Naive thymus-derived CD4-positive, alpha-beta T cell (primary cell): ENCODE measurements at regions of chr20 and their contacts with region 1.

Region 1: GRCh38 chr20:59032023-59032712 is at the start of gene ATP5F1E:
- DNase-seq: peak; percentile 94 to 98 (median 96)
- ATAC-seq: peak; percentile 98
- H3K4me3 ChIP-seq: peak within 1 kb of the TSS; percentile 62
- H3K4me3 Mint-ChIP-seq: peak within 1 kb of the TSS; percentile 87 to 96 (median 94)
- H3K27ac ChIP-seq: peak within 1 kb of the TSS; percentile 85
- H3K27ac Mint-ChIP-seq: peak within 1 kb of the TSS; percentile 86 to 98 (median 94)
- H3K4me1 ChIP-seq: peaks cover 40 to 44% of the 10 kb centered on the region in 2 donors
- H3K4me1 Mint-ChIP-seq: peaks cover 40 to 62% (median 56%) of the 10 kb centered on the region in 7 donors
- H3K27me3 ChIP-seq: no peaks in the 10 kb centered on the region
- H3K27me3 Mint-ChIP-seq: no peaks in the 10 kb centered on the region
- total RNA-seq, gene ATP5F1E: 57.0 to 81.7 (median 67.4) TPM

Region 2: GRCh38 chr20:58236612-58237330 is 795.4 kb before region 1 on chr20:
- CTCF ChIA-PET with region 1: no interaction called
- POLR2A ChIA-PET with region 1: no interaction called
- intact Hi-C with region 1: loop called in 1 of 2 experiments (anchors 10 kb)
- DNase-seq: peak; percentile 62 to 90 (median 80)
- ATAC-seq: peak; percentile 96
- H3K4me3 ChIP-seq: peak overlapping the region; percentile 65
- H3K4me3 Mint-ChIP-seq: peak overlapping the region; percentile 77 to 94 (median 92)
- H3K27ac ChIP-seq: peak overlapping the region; percentile 76
- H3K27ac Mint-ChIP-seq: peak overlapping the region; percentile 71 to 96 (median 91)
- H3K4me1 ChIP-seq: no peaks in the 10 kb centered on the region
- H3K4me1 Mint-ChIP-seq: peaks cover 2 to 25% (median 17%) of the 10 kb centered on the region in 7 donors
- H3K27me3 ChIP-seq: no peaks in the 10 kb centered on the region
- H3K27me3 Mint-ChIP-seq: no peaks in the 10 kb centered on the region

Region 3: GRCh38 chr20:58888521-58889333 is 143.4 kb before region 1 on chr20:
- CTCF ChIA-PET with region 1: no interaction called
- POLR2A ChIA-PET with region 1: interaction called, 17 read pairs
- intact Hi-C with region 1: loop called (anchors 1 kb)
- DNase-seq: peak; percentile 64 to 91 (median 86)
- ATAC-seq: peak; percentile 76
- H3K4me3 ChIP-seq: peak overlapping the region; percentile 68
- H3K4me3 Mint-ChIP-seq: peak overlapping the region; percentile 81 to 94 (median 87)
- H3K27ac ChIP-seq: peak overlapping the region; percentile 95
- H3K27ac Mint-ChIP-seq: peak overlapping the region; percentile 67 to 97 (median 90)
- H3K4me1 ChIP-seq: peaks cover 4 to 6% of the 10 kb centered on the region in 2 donors
- H3K4me1 Mint-ChIP-seq: peaks cover 15 to 46% (median 37%) of the 10 kb centered on the region in 7 donors
- H3K27me3 ChIP-seq: no peaks in the 10 kb centered on the region
- H3K27me3 Mint-ChIP-seq: peaks cover 0 to 3% (median 0%) of the 10 kb centered on the region in 5 donors

Region 4: GRCh38 chr20:59006864-59007664 is 25.1 kb before region 1 on chr20 and contains the start of gene CTSZ:
- CTCF ChIA-PET with region 1: no interaction called
- POLR2A ChIA-PET with region 1: interaction called, 10 read pairs
- intact Hi-C with region 1: loop called (anchors 1 kb)
- DNase-seq: peak in 7 of 9 donors; percentile 22 to 70 (median 36)
- ATAC-seq: peak; percentile 63
- H3K4me3 ChIP-seq: peak within 1 kb of the TSS; percentile 55
- H3K4me3 Mint-ChIP-seq: peak within 1 kb of the TSS; percentile 72 to 89 (median 80)
- H3K27ac ChIP-seq: peak within 1 kb of the TSS; percentile 62
- H3K27ac Mint-ChIP-seq: peak within 1 kb of the TSS in 6 of 9 donors; percentile 36 to 93 (median 62)
- H3K4me1 ChIP-seq: peaks cover 20 to 23% of the 10 kb centered on the region in 2 donors
- H3K4me1 Mint-ChIP-seq: peaks cover 32 to 54% (median 38%) of the 10 kb centered on the region in 7 donors
- H3K27me3 ChIP-seq: no peaks in the 10 kb centered on the region
- H3K27me3 Mint-ChIP-seq: no peaks in the 10 kb centered on the region
- total RNA-seq, gene CTSZ: 29.5 to 165 (median 34.1) TPM

Region 5: GRCh38 chr20:59159493-59160376 is 127.6 kb after region 1 on chr20:
- CTCF ChIA-PET with region 1: no interaction called
- POLR2A ChIA-PET with region 1: interaction called, 10 read pairs
- intact Hi-C with region 1: loop called in 1 of 2 experiments (anchors 2 kb)
- DNase-seq: peak in 8 of 9 donors; percentile 50 to 86 (median 82)
- ATAC-seq: peak; percentile 93
- H3K4me3 ChIP-seq: peak overlapping the region; percentile 55
- H3K4me3 Mint-ChIP-seq: peak overlapping the region; percentile 76 to 93 (median 89)
- H3K27ac ChIP-seq: peak overlapping the region; percentile 93
- H3K27ac Mint-ChIP-seq: peak overlapping the region; percentile 95 to 99 (median 98)
- H3K4me1 ChIP-seq: peaks cover 55 to 79% of the 10 kb centered on the region in 2 donors
- H3K4me1 Mint-ChIP-seq: peaks cover 49 to 95% (median 89%) of the 10 kb centered on the region in 7 donors
- H3K27me3 ChIP-seq: no peaks in the 10 kb centered on the region
- H3K27me3 Mint-ChIP-seq: no peaks in the 10 kb centered on the region

Region 6: DNA sequence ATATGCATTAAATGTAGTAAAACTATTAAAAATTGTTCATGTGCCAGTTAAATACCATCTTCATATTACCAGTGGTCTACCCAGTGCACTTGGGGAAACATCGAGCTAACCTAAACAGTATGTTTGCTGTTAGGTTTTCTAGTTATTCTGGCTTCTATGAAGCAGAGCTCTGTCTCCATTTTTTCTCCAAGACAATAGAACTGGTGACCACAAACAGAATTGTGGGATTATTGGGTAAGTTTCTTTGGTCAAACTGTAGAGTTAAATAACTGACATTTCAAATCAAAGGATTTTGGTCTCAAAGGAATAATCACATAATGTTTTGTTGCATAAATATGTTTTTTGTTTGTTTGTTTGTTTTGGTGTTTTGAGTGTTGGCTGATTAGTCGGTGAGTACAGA is 227.8 kb after region 1 on chr20:
- CTCF ChIA-PET with region 1: no interaction called
- POLR2A ChIA-PET with region 1: no interaction called
- intact Hi-C with region 1: no loop called
- DNase-seq: no peak
- ATAC-seq: no peak
- H3K4me3 ChIP-seq: no peak overlapping the region
- H3K4me3 Mint-ChIP-seq: no peak overlapping the region
- H3K27ac ChIP-seq: no peak overlapping the region
- H3K27ac Mint-ChIP-seq: no peak overlapping the region
- H3K4me1 ChIP-seq: peaks cover 13 to 16% of the 10 kb centered on the region in 2 donors
- H3K4me1 Mint-ChIP-seq: peaks cover 18 to 39% (median 37%) of the 10 kb centered on the region in 7 donors
- H3K27me3 ChIP-seq: no peaks in the 10 kb centered on the region
- H3K27me3 Mint-ChIP-seq: peaks cover 0 to 43% (median 0%) of the 10 kb centered on the region in 5 donors

Region 7: DNA sequence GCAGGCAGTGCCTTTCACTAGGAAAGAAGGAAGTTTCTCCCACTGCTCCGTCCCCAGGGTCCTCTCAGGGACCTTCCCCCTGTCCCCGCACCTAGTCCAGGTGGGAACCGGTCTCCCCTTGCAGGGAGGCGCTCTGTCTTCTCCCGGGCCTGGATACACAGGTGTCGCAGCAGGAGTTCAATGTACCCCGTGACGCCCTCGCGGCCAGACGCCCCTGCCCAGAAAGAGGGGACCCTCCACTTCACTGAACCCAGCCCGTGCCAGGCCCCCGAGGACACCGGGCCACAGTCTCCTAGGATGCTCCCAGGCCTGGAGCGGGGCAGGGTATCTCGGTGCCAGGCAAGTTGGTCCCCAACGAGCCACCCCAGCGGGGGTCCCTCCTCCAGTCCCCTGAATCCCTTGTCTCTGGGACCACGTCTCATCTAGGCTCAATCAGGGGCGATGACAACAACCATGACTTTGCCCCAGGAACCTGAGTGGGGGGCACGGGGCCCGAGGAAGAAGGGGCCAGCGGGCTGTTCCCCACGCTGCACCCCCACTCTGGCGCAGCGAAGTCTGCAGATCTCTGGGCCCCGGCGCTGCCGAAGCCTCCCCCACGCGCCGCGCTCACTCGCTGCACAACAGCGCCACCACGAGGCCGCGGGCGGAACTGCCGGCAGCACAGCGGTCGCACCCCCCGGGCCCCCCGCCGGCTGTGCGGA is 371.2 kb after region 1 on chr20:
- CTCF ChIA-PET with region 1: interaction called, 3 read pairs
- POLR2A ChIA-PET with region 1: interaction called, 5 read pairs
- intact Hi-C with region 1: loop called in 1 of 2 experiments (anchors 2 kb)
- DNase-seq: peak; percentile 65 to 91 (median 77)
- ATAC-seq: peak; percentile 93
- H3K4me3 ChIP-seq: peak overlapping the region; percentile 53
- H3K4me3 Mint-ChIP-seq: peak overlapping the region in 1 of 10 donors; percentile 59
- H3K27ac ChIP-seq: peak overlapping the region; percentile 41
- H3K27ac Mint-ChIP-seq: peak overlapping the region in 4 of 9 donors; percentile 49 to 94 (median 85)
- H3K4me1 ChIP-seq: peaks cover 12 to 35% of the 10 kb centered on the region in 2 donors
- H3K4me1 Mint-ChIP-seq: peaks cover 0 to 4% (median 2%) of the 10 kb centered on the region in 7 donors
- H3K27me3 ChIP-seq: peaks cover 0 to 7% of the 10 kb centered on the region in 2 donors
- H3K27me3 Mint-ChIP-seq: peaks cover 0 to 18% (median 3%) of the 10 kb centered on the region in 5 donors